ENCODE measurements at regions of chr19 and their contacts with region 1.

Region 1: DNA sequence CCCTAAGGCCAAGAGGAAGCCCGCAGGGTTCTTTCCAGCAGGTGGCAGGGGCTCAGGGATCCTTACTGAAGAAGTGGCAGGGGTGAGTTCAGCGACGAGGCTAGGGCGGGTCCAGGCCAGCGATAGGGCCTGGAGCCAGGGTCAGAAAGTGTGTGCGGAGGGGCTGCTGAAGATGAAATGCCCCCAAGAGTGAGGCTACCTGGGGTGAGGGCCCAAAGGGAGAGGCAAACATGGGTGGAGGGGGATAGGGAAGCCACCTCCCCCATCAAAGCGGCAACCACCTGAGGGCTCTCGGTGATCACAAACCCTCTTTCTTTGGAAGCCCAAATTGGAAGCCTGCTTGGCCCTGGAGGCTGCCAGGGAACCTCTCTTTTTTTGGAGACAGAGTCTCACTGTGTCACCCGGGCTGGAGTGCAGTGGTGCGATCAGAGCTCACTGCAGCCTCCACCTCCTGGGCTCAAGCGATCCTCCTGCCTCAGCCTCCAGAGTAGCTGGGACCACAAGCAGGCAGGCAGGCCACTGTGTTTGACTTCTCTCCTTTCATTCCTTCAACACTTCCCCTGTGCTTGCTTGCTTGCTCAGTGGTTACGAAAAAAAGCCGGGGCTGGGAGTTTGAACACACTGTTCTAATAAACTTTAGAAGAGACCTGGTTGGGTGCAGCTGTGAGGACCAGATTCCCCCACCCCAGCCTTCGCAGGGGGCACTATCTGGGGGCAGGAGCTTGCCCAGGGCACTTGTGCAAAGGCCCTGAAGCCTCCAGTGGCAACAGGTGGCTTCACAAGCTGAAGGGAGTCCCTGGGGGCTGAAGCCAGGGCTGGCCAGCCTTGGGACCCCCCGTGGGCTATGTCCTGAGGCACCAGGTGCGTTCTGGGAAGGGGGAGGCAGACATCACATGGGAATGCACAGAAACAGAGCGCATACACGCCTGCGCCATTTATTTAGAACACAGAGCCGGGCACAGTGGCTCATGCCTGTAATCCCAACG is 1.4 kb upstream of the ATP8B3 start:
- DNase-seq: no peak
- H3K4me3 Mint-ChIP-seq: peak overlapping the region; percentile 91
- H3K27ac Mint-ChIP-seq: peak overlapping the region; percentile 98
- H3K4me1 Mint-ChIP-seq: peaks cover 27% of the 10 kb centered on the region
- H3K27me3 Mint-ChIP-seq: peaks cover 5% of the 10 kb centered on the region

Region 2: DNA sequence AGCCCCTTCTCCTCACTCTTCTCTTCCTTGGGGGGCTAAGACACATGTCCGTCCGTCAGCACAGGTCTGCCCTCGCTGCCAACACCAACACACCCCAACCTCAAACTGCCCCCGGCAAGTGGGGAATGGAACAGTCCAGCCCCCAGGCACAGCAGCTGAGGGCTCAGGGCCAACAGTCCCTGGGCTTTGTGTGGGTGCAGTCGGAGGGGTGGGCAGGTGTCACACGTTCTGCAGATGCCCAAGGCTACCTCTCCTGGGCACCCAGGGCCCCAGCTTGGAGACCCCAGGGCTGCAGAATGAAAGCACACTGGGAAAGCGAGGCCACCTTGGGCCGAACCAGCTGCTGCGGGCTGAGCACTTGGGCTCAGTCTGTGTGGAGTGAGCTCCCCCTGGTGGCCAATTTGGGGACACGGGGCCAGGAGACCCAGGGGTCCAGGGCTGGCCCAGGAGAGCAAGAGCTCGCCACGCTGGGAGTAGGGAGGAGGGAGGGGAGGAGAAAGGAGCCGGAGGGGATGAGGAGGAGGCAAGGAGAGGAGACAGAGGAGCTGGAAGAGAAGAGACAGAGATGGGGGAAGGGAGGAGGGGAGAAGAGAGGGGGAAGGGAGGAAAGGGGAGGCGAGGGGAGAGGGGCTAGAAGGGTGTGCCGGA is 12.5 kb after region 1 on chr19:
- CTCF ChIA-PET with region 1: interaction called, 18 read pairs
- DNase-seq: peak; percentile 85
- H3K4me3 Mint-ChIP-seq: no peak overlapping the region
- H3K27ac Mint-ChIP-seq: no peak overlapping the region
- H3K4me1 Mint-ChIP-seq: peaks cover 4% of the 10 kb centered on the region
- H3K27me3 Mint-ChIP-seq: no peaks in the 10 kb centered on the region